Aorta (tissue), 5 donors: ENCODE measurements at regions of chr2 and their contacts with region 1.

Region 1: GRCh38 chr2:209525834-209526281 is 102.0 kb downstream of the MAP2 start:
- DNase-seq: no peak
- ATAC-seq: peak; percentile 74
- H3K4me3 ChIP-seq: no peak overlapping the region
- H3K27ac ChIP-seq: no peak overlapping the region
- H3K4me1 ChIP-seq: peaks cover 0 to 5% of the 10 kb centered on the region in 2 donors
- H3K27me3 ChIP-seq: no peaks in the 10 kb centered on the region

Region 2: DNA sequence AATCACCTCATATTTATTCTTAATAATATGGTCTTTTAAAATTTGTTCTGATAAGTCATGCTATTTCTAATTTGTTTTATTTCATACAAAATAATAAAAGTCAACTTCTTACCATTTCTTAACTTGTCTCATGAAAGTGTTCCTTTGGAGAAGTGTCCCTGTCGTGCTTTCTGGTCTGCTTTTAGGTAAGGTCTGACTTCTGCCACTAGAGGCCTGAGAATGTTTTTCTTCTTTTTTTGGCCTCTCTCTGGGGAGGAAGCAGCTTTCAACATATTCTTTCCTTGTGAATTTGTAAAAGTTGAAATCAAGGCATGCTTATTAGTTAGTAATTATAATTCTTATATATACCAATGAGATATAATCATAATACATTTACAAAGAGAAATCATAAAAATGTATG is 62.6 kb before region 1 on chr2:
- intact Hi-C with region 1: loop called in 1 of 2 experiments (anchors 10 kb)
- DNase-seq: no peak
- ATAC-seq: no peak
- H3K4me3 ChIP-seq: no peak overlapping the region
- H3K27ac ChIP-seq: no peak overlapping the region
- H3K4me1 ChIP-seq: peaks cover 3% of the 10 kb centered on the region in 2 donors
- H3K27me3 ChIP-seq: no peaks in the 10 kb centered on the region

Region 3: DNA sequence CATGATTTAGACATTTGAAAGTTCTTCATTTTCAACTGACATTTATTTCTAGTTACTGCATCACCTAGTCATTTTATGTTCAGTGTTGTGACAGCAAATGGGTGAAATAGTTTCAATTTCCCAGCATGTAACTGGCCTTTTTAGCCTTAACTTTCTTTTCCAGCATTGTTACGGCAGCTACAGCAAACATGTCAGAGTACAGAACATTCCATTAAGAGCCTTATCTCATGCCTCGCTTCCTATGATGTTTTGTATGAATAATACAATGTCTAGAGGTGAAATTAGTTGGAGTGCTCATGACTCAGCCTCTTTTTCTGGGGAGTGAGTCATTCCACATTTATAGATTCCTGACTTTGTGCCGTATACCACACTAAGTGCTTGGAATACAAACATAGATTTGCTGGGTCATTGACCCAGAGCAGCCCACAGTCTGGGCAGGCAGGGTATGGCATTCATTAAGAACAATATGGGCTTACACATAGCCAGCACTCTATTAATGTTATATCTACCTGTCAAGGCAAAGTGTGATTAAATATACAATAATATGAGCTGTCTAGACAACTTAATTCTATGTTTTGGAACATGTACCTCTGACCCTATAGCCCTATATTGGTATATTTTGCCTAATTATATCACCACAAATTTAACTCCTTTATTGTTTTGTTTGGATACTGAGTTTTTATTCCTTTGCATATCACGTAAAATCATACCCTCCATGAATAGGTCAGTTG is 29.8 kb before region 1 on chr2:
- intact Hi-C with region 1: loop called (anchors 1 to 2 kb)
- DNase-seq: no peak
- ATAC-seq: peak; percentile 94
- H3K4me3 ChIP-seq: no peak overlapping the region
- H3K27ac ChIP-seq: peak overlapping the region; percentile 73 to 87
- H3K4me1 ChIP-seq: peaks cover 0 to 2% of the 10 kb centered on the region in 2 donors
- H3K27me3 ChIP-seq: no peaks in the 10 kb centered on the region

Region 4: GRCh38 chr2:209619782-209620181 is 93.9 kb after region 1 on chr2:
- intact Hi-C with region 1: no loop called
- DNase-seq: no peak
- ATAC-seq: no peak
- H3K4me3 ChIP-seq: no peak overlapping the region
- H3K27ac ChIP-seq: no peak overlapping the region
- H3K4me1 ChIP-seq: no peaks in the 10 kb centered on the region
- H3K27me3 ChIP-seq: no peaks in the 10 kb centered on the region